ENCODE measurements at regions of chr5 and their contacts with region 1.

Region 1: DNA sequence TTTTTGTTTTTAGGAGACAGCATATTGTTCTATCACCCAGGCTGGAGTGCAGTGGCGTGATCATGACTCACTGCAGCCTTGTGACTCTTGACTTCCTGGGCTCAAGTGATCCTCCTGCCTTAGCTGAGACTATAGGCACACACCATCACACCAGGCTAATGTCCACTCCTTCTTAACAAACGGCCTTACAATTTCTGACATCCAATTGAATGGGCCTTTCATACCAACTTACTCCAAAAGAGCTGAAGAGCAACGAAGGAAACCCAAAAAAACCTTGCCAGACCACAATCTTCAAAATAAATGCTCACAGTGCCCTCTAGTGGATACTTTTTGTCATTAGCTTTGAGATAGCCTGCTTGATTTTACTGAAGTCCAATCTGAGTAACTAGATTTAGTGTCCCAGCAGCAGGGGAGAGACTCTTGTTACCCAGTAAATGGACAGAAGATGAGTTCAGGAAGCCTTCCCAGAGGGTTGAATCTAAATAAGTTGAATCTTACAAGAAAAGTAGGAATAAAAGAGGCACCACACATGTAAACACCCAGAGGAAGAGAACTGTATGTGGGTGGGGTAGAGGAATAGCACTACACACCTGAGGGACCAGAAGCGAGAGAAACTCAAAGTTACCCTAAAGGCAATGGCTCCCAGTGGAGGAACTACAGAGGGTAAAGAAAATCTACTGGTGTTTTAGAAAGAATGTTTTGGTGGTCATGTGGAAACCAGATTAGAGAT is 9.3 kb downstream of the ZNF622 start:
- DNase-seq: peak; percentile 74
- H3K4me3 ChIP-seq: no peak overlapping the region
- H3K27ac ChIP-seq: peak overlapping the region; percentile 79
- H3K4me1 ChIP-seq: peaks cover 14% of the 10 kb centered on the region
- H3K27me3 ChIP-seq: no peaks in the 10 kb centered on the region
- CTCF ChIP-seq: peak; percentile 59 to 62

Region 2: GRCh38 chr5:16152601-16153568 is 303.4 kb before region 1 on chr5:
- CTCF ChIA-PET with region 1: no interaction called
- dilution Hi-C with region 1: no loop called
- in situ Hi-C with region 1: loop called in 1 of 2 experiments (anchors 10 kb)
- intact Hi-C with region 1: no loop called
- DNase-seq: peak; percentile 2
- H3K4me3 ChIP-seq: no peak overlapping the region
- H3K27ac ChIP-seq: no peak overlapping the region
- H3K4me1 ChIP-seq: no peaks in the 10 kb centered on the region
- H3K27me3 ChIP-seq: no peaks in the 10 kb centered on the region
- CTCF ChIP-seq: no peak

Region 3: GRCh38 chr5:16160706-16161105 is 295.6 kb before region 1 on chr5:
- CTCF ChIA-PET with region 1: interaction called, 6 read pairs
- dilution Hi-C with region 1: loop called (anchors 10 kb)
- in situ Hi-C with region 1: loop called in 1 of 2 experiments (anchors 10 kb)
- intact Hi-C with region 1: loop called (anchors 1 kb)
- DNase-seq: peak; percentile 41
- H3K4me3 ChIP-seq: no peak overlapping the region
- H3K27ac ChIP-seq: no peak overlapping the region
- H3K4me1 ChIP-seq: no peaks in the 10 kb centered on the region
- H3K27me3 ChIP-seq: no peaks in the 10 kb centered on the region
- CTCF ChIP-seq: peak; percentile 71 to 85

Region 4: GRCh38 chr5:16179936-16180788 is 276.1 kb before region 1 on chr5:
- CTCF ChIA-PET with region 1: no interaction called
- dilution Hi-C with region 1: no loop called
- in situ Hi-C with region 1: loop called in 1 of 2 experiments (anchors 10 kb)
- intact Hi-C with region 1: no loop called
- DNase-seq: no peak
- H3K4me3 ChIP-seq: no peak overlapping the region
- H3K27ac ChIP-seq: no peak overlapping the region
- H3K4me1 ChIP-seq: no peaks in the 10 kb centered on the region
- H3K27me3 ChIP-seq: peaks cover 16% of the 10 kb centered on the region
- CTCF ChIP-seq: no peak

Region 5: DNA sequence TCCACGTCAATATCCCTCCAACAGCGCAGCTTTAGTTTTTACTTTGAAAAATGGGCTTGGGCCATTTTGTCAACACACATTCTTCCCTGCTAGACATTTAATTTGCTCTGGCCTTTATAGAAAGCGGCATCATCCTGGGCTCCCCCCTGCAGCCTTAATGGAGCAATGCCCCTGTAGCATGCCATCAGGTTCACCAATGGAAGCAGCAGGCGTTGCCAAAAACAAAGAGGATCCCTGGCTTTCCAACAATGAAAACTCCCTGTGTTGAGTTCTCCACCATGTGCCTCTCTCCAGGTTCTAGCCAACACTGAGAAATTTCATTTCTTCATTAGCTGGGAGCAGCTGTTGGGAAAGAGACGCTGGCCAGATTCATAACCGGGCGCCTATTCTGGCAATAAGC is 130.1 kb before region 1 on chr5:
- CTCF ChIA-PET with region 1: no interaction called
- dilution Hi-C with region 1: no loop called
- in situ Hi-C with region 1: no loop called
- intact Hi-C with region 1: loop called (anchors 1 kb)
- DNase-seq: no peak
- H3K4me3 ChIP-seq: no peak overlapping the region
- H3K27ac ChIP-seq: no peak overlapping the region
- H3K4me1 ChIP-seq: no peaks in the 10 kb centered on the region
- H3K27me3 ChIP-seq: no peaks in the 10 kb centered on the region
- CTCF ChIP-seq: no peak

Region 6: DNA sequence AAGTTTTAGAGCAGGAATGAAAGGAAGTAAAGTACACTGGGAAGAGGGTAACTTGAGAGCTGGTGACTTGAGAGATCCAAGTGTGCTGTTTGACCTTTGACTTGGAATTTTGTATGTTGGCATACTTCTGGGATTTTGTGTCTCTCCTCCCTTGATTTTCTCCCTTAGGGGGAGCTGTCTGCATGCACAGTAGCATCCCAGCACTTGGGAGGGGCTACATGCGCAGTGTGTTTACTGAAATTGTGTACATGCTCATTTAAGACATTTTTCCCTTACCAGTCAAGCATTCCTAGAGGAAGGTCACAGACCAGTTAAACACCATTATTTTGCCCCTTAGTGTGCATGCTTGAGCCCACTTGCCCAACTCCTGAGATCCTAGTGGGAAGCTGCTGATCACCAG is 110.8 kb before region 1 on chr5:
- CTCF ChIA-PET with region 1: interaction called, 7 read pairs
- dilution Hi-C with region 1: no loop called
- in situ Hi-C with region 1: no loop called
- intact Hi-C with region 1: loop called (anchors 1 kb)
- DNase-seq: no peak
- H3K4me3 ChIP-seq: no peak overlapping the region
- H3K27ac ChIP-seq: no peak overlapping the region
- H3K4me1 ChIP-seq: no peaks in the 10 kb centered on the region
- H3K27me3 ChIP-seq: no peaks in the 10 kb centered on the region
- CTCF ChIP-seq: peak; percentile 22 to 48

Region 7: GRCh38 chr5:16406630-16407029 is 49.6 kb before region 1 on chr5:
- CTCF ChIA-PET with region 1: interaction called, 4 read pairs
- dilution Hi-C with region 1: loop called (anchors 5 kb)
- in situ Hi-C with region 1: no loop called
- intact Hi-C with region 1: no loop called
- DNase-seq: no peak
- H3K4me3 ChIP-seq: no peak overlapping the region
- H3K27ac ChIP-seq: no peak overlapping the region
- H3K4me1 ChIP-seq: peaks cover 9% of the 10 kb centered on the region
- H3K27me3 ChIP-seq: no peaks in the 10 kb centered on the region
- CTCF ChIP-seq: no peak

Region 8: GRCh38 chr5:16418471-16418922 is 37.8 kb before region 1 on chr5:
- CTCF ChIA-PET with region 1: no interaction called
- dilution Hi-C with region 1: no loop called
- in situ Hi-C with region 1: no loop called
- intact Hi-C with region 1: no loop called
- DNase-seq: no peak
- H3K4me3 ChIP-seq: no peak overlapping the region
- H3K27ac ChIP-seq: no peak overlapping the region
- H3K4me1 ChIP-seq: peaks cover 6% of the 10 kb centered on the region
- H3K27me3 ChIP-seq: no peaks in the 10 kb centered on the region
- CTCF ChIP-seq: no peak

Region 9: GRCh38 chr5:18098691-18099090 is 1642.4 kb after region 1 on chr5:
- CTCF ChIA-PET with region 1: no interaction called
- dilution Hi-C with region 1: no loop called
- in situ Hi-C with region 1: no loop called
- intact Hi-C with region 1: no loop called
- DNase-seq: no peak
- H3K4me3 ChIP-seq: no peak overlapping the region
- H3K27ac ChIP-seq: no peak overlapping the region
- H3K4me1 ChIP-seq: no peaks in the 10 kb centered on the region
- H3K27me3 ChIP-seq: no peaks in the 10 kb centered on the region
- CTCF ChIP-seq: no peak

Measured in mammary epithelial cell (primary cell).